Activated CD4-positive, alpha-beta T cell treated with anti-CD3 and anti-CD28 coated beads for 36 hours (primary cell): ENCODE measurements at regions of chr10 and their contacts with region 1.

Region 1: GRCh38 chr10:11017570-11018431 is at the start of gene CELF2:
- DNase-seq: peak; percentile 76
- ATAC-seq: peak; percentile 78
- H3K4me3 Mint-ChIP-seq: peak within 1 kb of the TSS; percentile 80
- H3K27ac Mint-ChIP-seq: peak within 1 kb of the TSS; percentile 77
- H3K4me1 Mint-ChIP-seq: peaks cover 21% of the 10 kb centered on the region
- H3K27me3 Mint-ChIP-seq: peaks cover 56% of the 10 kb centered on the region
- total RNA-seq, gene CELF2: 102 to 119 TPM

Region 2: GRCh38 chr10:10786109-10787090 is 231.4 kb before region 1 on chr10:
- CTCF ChIA-PET with region 1: no interaction called
- POLR2A ChIA-PET with region 1: no interaction called
- intact Hi-C with region 1: no loop called
- DNase-seq: no peak
- ATAC-seq: no peak
- H3K4me3 Mint-ChIP-seq: no peak overlapping the region
- H3K27ac Mint-ChIP-seq: no peak overlapping the region
- H3K4me1 Mint-ChIP-seq: peaks cover 5% of the 10 kb centered on the region
- H3K27me3 Mint-ChIP-seq: peaks cover 7% of the 10 kb centered on the region

Region 3: DNA sequence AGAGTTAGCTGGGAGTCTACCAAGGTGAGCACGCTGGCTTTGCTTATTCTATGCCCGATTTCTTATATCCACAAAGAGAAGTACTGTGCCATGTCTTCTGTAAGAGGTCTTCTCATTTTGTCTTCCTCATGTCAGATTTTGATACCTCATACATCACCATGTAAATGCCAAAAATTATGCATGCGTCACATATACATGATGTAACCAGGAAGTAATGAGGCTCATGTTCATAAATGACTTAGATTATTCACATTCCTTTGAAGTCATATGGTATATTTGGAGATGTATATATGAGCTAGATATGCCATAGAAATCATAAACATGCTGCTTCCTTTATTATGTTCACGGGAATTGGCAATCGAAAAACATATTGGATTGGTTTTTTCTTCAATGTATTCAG is 97.8 kb before region 1 on chr10:
- CTCF ChIA-PET with region 1: no interaction called
- POLR2A ChIA-PET with region 1: no interaction called
- intact Hi-C with region 1: no loop called
- DNase-seq: no peak
- ATAC-seq: no peak
- H3K4me3 Mint-ChIP-seq: no peak overlapping the region
- H3K27ac Mint-ChIP-seq: no peak overlapping the region
- H3K4me1 Mint-ChIP-seq: peaks cover 5% of the 10 kb centered on the region
- H3K27me3 Mint-ChIP-seq: peaks cover 10% of the 10 kb centered on the region

Region 4: GRCh38 chr10:11145495-11145855 is 127.7 kb after region 1 on chr10:
- CTCF ChIA-PET with region 1: no interaction called
- POLR2A ChIA-PET with region 1: no interaction called
- intact Hi-C with region 1: loop called (anchors 5 kb)
- DNase-seq: peak; percentile 74
- ATAC-seq: peak; percentile 78
- H3K4me3 Mint-ChIP-seq: peak overlapping the region; percentile 70
- H3K27ac Mint-ChIP-seq: peak overlapping the region; percentile 96
- H3K4me1 Mint-ChIP-seq: peaks cover 91% of the 10 kb centered on the region
- H3K27me3 Mint-ChIP-seq: no peaks in the 10 kb centered on the region

Region 5: DNA sequence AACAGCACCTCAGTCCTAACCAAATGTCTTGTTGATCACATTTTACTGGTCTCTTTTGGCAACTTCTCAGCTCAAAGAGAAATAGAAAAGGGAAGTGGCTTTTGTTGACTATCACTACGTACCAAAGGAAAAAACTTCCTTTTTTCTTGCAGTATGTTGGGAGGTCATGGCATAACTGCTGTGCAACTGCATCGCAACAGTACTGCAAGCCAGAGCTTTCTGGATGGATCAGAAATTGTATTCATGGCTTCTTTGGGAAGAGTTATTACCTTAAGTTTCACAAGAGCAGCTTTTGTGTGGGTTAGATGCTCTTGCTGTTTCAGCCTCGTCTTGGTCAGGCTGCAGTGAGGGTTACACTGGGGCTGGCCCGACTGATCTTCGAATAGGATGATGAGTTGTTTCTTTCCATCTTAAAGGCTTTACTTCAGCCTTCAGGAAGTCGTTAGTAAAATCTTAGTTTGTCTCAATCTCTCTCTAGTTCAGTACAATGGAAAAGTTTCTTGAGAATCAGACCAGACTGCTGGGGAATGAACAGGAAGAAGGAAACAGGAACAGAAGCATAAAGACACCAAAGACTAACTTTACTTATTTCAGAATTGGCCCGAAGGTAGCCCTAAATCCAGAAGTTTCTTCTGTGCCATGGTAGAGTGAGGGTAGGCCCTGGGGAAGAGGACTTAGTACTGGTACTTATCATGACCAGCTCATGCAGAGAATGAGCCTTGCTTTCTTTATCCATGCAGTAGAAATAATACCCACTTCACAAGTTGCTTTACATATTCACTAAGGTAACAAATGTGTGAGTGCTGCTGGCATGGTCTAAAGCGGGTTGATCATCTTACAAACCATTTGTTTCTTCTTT is 153.4 kb after region 1 on chr10:
- CTCF ChIA-PET with region 1: no interaction called
- POLR2A ChIA-PET with region 1: no interaction called
- intact Hi-C with region 1: loop called in 1 of 2 experiments (anchors 5 kb)
- DNase-seq: peak; percentile 80
- ATAC-seq: peak; percentile 49
- H3K4me3 Mint-ChIP-seq: no peak overlapping the region
- H3K27ac Mint-ChIP-seq: no peak overlapping the region
- H3K4me1 Mint-ChIP-seq: peaks cover 41% of the 10 kb centered on the region
- H3K27me3 Mint-ChIP-seq: no peaks in the 10 kb centered on the region